ENCODE measurements at regions of chr2 and their contacts with region 1.

Region 1: DNA sequence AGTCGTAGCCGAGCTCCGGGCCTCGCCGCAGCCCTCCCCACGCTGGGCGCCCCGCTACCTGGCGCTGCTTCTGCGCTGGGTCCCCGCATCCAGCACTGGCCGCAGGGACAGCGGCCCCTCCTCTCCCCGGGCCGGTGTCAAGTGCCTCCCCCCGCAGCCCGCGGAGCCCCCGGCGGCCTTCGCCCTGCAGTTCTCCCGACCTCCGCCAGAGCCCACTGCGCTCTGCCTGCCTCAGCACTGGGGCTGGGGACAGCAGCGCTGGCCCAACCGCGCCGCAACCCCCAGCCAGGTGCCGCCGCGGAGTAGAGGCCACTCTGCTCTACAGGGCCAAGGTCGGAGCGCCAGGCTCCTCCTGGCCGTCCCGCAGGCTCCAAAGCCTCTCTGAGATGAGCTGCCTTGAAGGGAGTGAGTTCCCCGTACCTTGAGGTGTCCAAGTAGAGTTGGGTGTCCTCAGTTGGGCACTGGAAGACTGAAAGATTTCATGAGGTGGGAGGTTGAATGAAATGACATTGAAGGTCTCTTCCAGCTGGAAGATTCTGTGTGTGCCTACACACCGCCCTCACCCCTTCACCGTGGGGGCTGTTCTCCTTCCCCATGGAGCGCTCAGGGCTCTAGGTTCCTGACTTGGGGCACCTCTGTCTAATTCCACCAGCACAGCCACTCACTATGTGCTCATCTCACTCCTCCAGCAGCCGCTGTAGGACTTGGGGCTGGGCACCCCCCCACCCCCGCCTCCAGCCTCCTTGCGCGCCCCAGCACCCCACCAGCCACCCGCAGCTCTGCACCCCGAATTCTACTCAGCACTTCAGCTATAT is 854 bp upstream of the DNMT3A start:
- DNase-seq: peak; percentile 82
- H3K4me3 Mint-ChIP-seq: peak overlapping the region; percentile 80
- H3K27ac Mint-ChIP-seq: peak overlapping the region; percentile 71
- H3K4me1 Mint-ChIP-seq: peaks cover 37% of the 10 kb centered on the region
- H3K27me3 Mint-ChIP-seq: no peaks in the 10 kb centered on the region

Region 2: DNA sequence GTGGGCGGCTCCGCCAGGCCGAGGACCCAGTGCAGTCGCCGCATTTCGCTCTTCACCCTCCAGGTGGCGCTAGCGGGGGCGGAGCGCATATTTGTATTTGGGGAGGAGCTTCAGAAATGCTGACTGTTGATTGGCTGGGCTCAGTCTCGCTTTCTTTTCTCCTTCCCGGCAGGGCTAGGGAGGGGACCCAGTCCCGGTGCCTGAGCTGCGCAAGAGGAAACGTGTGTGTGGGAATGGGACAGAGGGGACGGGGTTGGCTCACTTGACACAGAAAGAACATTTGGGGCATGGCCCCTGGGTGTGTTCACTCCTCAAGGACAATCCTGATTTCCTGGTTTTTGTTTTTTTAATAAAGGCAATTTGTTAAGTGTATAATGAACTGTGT is 19.5 kb after region 1 on chr2:
- CTCF ChIA-PET with region 1: interaction called, 19 read pairs
- intact Hi-C with region 1: loop called (anchors 1 kb)
- DNase-seq: peak; percentile 98
- H3K4me3 Mint-ChIP-seq: peak overlapping the region; percentile 82
- H3K27ac Mint-ChIP-seq: peak overlapping the region; percentile 94
- H3K4me1 Mint-ChIP-seq: peaks cover 11% of the 10 kb centered on the region
- H3K27me3 Mint-ChIP-seq: no peaks in the 10 kb centered on the region

Region 3: DNA sequence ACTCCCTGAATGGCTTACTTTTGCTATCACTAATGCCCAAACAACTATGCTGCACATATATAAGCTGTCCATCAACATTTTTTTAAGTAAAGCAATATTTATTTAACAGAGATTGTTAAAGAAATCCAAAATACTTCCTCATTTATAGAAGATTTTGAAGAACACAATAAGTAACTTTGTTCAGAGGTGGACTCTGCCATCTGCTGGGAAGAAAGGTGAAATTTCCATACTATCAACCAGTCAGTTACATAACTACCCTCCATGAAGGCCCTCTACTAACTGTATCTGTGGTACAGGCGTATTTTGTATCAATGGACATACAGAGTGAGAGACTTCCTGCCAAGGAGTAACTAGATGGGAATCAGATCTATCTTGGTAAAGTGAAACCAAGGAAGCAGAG is 224.8 kb after region 1 on chr2:
- CTCF ChIA-PET with region 1: interaction called, 3 read pairs
- intact Hi-C with region 1: loop called (anchors 1 kb)
- DNase-seq: peak; percentile 44
- H3K4me3 Mint-ChIP-seq: no peak overlapping the region
- H3K27ac Mint-ChIP-seq: no peak overlapping the region
- H3K4me1 Mint-ChIP-seq: no peaks in the 10 kb centered on the region
- H3K27me3 Mint-ChIP-seq: no peaks in the 10 kb centered on the region

Region 4: DNA sequence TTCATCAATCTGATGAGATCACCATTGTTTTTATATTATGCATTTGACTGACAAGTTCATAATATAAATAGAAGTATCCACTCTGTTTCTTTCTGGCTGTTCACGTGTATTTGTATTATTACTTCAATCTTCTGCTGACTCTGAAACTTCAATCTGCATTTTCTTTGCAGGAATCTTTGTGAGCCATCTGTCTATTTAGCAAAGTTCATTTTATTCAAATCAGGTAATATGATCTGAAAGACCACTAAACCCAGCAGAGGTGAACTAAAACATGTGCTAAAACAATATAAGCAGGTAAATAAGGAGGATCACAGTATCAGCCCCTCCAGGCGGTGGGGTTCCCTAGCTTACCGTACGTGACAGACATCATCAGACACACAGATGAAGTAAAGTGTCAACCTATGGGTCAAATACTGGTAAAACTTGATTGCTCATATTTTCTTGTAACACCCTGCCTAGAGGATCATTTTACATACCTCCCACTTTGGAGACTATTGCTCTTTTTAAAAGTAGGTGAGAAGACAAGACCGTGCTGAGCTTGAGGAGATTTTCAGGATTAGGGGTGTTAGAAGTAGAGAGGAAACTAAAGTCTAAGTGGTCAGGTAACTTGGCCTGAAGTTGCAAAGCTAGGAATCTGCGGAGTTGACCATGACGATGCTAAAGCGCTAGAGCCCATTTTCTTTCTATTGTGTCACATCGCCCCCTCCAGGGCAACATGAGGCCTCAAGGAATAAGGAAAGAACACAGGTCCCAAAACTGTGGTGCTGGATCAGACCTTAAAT is 321.8 kb after region 1 on chr2:
- CTCF ChIA-PET with region 1: no interaction called
- intact Hi-C with region 1: loop called (anchors 2 kb)
- DNase-seq: peak; percentile 64
- H3K4me3 Mint-ChIP-seq: peak overlapping the region; percentile 36
- H3K27ac Mint-ChIP-seq: no peak overlapping the region
- H3K4me1 Mint-ChIP-seq: peaks cover 21% of the 10 kb centered on the region
- H3K27me3 Mint-ChIP-seq: no peaks in the 10 kb centered on the region

Measured in activated naive CD4-positive, alpha-beta T cell treated with anti-CD3 and anti-CD28 coated beads for 36 hours (primary cell).